K562 (cell line): ENCODE measurements at regions of chr14 and their contacts with region 1.

Region 1: GRCh38 chr14:22472935-22473854 is 115.8 kb downstream of the DAD1 start:
- DNase-seq: peak; percentile 12 to 55 (median 22)
- ATAC-seq: peak; percentile 71
- H3K4me3 ChIP-seq: no peak overlapping the region
- H3K27ac ChIP-seq: no peak overlapping the region
- H3K4me1 ChIP-seq: peaks cover 0 to 3% of the 10 kb centered on the region in 2 experiments; a peak in 4 of 5 replicates
- H3K27me3 ChIP-seq: peaks cover 2 to 9% of the 10 kb centered on the region in 2 experiments; a peak in 3 of 5 replicates
- CTCF ChIP-seq: peak; percentile 54 to 74 (median 65); a peak in 5 of 6 replicates
- EP300 ChIP-seq: no peak
- POLR2A ChIP-seq: no peak
- RAD21 ChIP-seq: peak; percentile 80 to 88

Region 2: DNA sequence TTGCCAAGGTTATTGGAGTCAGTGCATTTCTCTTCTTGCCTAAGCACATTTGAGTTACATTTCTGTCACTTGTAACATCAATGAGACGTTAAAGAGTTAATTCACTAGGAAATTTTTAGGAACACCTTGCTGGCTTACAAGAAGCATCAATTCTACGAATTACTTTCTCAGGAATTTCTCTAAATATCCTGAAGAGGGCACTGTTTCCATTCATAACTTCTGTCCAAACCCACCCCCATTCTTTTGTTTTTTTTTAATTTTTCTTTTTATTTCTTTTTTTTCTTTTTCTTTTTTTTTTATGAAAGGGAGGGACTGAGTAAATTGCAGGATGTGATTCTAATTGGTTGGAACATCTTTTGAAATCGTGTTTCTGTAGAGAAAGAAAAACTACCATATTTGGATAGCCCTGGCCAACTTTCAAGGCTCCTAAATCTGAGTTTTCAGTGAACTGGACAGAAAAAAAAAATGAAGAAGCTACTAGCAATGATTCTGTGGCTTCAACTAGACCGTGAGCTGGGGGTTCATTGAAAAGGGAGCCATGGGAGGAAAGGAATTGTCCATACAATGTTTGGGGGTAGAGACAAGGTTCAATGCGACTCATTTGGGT is 169.5 kb before region 1 on chr14:
- CTCF ChIA-PET with region 1: no interaction called
- POLR2A ChIA-PET with region 1: no interaction called
- in situ Hi-C with region 1: loop called (anchors 10 kb)
- intact Hi-C with region 1: no loop called
- DNase-seq: peak in 2 of 4 experiments; percentile 12 to 15
- ATAC-seq: no peak
- H3K4me3 ChIP-seq: no peak overlapping the region
- H3K27ac ChIP-seq: no peak overlapping the region
- H3K4me1 ChIP-seq: no peaks in the 10 kb centered on the region
- H3K27me3 ChIP-seq: peaks cover 2 to 5% of the 10 kb centered on the region in 2 experiments; a peak in 3 of 5 replicates
- CTCF ChIP-seq: peak in 2 of 3 experiments; percentile 14 to 44; a peak in 3 of 6 replicates
- EP300 ChIP-seq: no peak
- POLR2A ChIP-seq: no peak
- RAD21 ChIP-seq: peak in 1 of 2 experiments; percentile 36; a peak in 2 of 4 replicates

Region 3: DNA sequence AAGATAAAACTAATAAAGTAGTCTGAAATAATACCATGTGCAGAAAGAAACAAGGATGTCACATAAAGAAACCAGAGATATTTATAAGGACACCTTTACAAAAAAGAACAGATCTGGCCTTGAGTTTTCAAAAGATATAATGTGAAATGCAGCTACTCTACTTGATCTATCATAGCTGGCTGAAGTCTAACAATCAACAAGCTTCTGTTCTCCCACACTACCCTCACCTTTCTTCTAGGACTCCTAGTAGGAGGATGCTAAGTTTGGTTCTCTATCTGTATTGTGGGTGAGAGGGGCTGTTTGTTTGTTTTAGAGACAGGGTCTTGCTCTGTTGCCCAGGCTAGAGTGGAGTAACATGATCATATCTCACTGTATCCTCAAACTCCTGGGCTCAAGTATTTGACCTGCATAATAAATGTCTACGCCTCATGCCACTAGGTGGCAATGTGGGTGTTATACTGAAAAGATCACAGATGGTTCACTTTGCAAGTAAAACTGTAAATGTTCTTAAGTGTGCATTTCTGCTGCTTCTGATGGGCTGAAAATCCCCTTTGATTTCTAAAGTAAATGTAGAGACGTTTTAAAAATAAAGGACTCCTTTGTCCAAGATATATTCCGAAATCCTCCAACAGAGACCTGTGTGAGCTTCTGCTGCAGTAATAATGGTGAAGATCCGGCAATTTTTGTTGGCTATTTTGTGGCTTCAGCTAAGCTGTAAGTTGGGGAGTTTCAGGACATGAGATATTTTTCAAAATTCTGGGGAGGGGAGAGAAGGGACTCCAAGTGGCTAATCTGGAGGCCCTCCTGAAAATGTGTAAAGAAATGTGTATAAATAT is 153.5 kb before region 1 on chr14:
- CTCF ChIA-PET with region 1: interaction called, 8 read pairs
- POLR2A ChIA-PET with region 1: no interaction called
- in situ Hi-C with region 1: no loop called
- intact Hi-C with region 1: loop called (anchors 5 kb)
- DNase-seq: peak in 2 of 4 experiments; percentile 20 to 53
- ATAC-seq: peak; percentile 79
- H3K4me3 ChIP-seq: no peak overlapping the region
- H3K27ac ChIP-seq: no peak overlapping the region
- H3K4me1 ChIP-seq: no peaks in the 10 kb centered on the region
- H3K27me3 ChIP-seq: no peaks in the 10 kb centered on the region
- CTCF ChIP-seq: peak; percentile 51 to 68 (median 56); a peak in 5 of 6 replicates
- EP300 ChIP-seq: no peak
- POLR2A ChIP-seq: no peak
- RAD21 ChIP-seq: peak; percentile 56 to 83

Region 4: GRCh38 chr14:22386924-22387775 is 86.0 kb before region 1 on chr14:
- CTCF ChIA-PET with region 1: interaction called, 33 read pairs
- POLR2A ChIA-PET with region 1: interaction called, 5 read pairs
- in situ Hi-C with region 1: loop called (anchors 5 kb)
- intact Hi-C with region 1: loop called (anchors 1 kb)
- DNase-seq: peak; percentile 55 to 78 (median 60)
- ATAC-seq: peak; percentile 77
- H3K4me3 ChIP-seq: no peak overlapping the region
- H3K27ac ChIP-seq: no peak overlapping the region
- H3K4me1 ChIP-seq: no peaks in the 10 kb centered on the region
- H3K27me3 ChIP-seq: peaks cover 8 to 19% of the 10 kb centered on the region in 2 experiments; a peak in 3 of 5 replicates
- CTCF ChIP-seq: peak; percentile 66 to 77 (median 69)
- EP300 ChIP-seq: no peak
- POLR2A ChIP-seq: no peak
- RAD21 ChIP-seq: peak; percentile 70 to 85

Region 5: GRCh38 chr14:22432348-22432976 is 40.7 kb before region 1 on chr14:
- CTCF ChIA-PET with region 1: no interaction called
- POLR2A ChIA-PET with region 1: no interaction called
- in situ Hi-C with region 1: no loop called
- intact Hi-C with region 1: loop called (anchors 5 kb)
- DNase-seq: peak in 1 of 4 experiments; percentile 20
- ATAC-seq: no peak
- H3K4me3 ChIP-seq: no peak overlapping the region
- H3K27ac ChIP-seq: no peak overlapping the region
- H3K4me1 ChIP-seq: peaks cover 0 to 12% of the 10 kb centered on the region in 2 experiments; a peak in 4 of 5 replicates
- H3K27me3 ChIP-seq: no peaks in the 10 kb centered on the region; a peak in 1 of 5 replicates
- CTCF ChIP-seq: no peak
- EP300 ChIP-seq: no peak
- POLR2A ChIP-seq: no peak
- RAD21 ChIP-seq: no peak

Region 6: DNA sequence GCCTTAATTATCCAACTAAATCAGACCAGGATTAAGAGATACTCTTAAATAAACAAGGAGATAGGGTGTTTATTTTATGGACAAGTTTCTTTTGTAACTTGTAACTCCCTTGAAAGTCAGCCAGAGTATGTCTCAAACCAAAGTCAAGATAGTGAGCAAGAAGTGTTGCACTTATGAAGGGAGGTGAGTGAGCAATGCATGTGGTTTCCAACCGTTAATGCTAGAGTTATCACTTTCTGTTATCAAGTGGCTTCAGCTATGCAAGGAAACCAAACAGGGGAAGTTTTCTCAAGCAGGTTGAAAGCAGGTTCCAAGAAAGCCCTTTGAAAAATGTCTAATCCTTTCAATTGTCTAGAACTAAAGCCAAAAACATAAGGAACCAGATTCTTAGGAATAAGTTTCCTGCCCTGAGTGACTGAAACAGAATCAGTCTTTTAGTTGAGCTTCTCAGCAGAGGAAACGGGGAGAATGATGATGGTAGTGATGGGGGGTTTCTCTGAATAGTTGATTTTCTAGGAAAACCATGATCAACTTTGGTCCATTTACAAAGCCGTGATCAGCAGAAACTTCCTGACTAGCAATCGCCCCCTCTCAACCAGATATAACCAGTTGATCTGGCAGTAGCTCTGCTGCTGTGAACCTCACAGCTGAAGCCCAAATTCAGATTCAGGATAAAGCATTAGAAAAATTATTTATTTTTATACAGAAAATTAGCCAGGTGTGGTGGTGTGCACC is 12.6 kb before region 1 on chr14:
- CTCF ChIA-PET with region 1: no interaction called
- POLR2A ChIA-PET with region 1: no interaction called
- in situ Hi-C with region 1: no loop called
- intact Hi-C with region 1: no loop called
- DNase-seq: peak in 3 of 4 experiments; percentile 7 to 63 (median 35)
- ATAC-seq: peak; percentile 69
- H3K4me3 ChIP-seq: no peak overlapping the region
- H3K27ac ChIP-seq: peak overlapping the region; percentile 72
- H3K4me1 ChIP-seq: peaks cover 0 to 3% of the 10 kb centered on the region in 2 experiments; a peak in 3 of 5 replicates
- H3K27me3 ChIP-seq: no peaks in the 10 kb centered on the region
- CTCF ChIP-seq: no peak
- EP300 ChIP-seq: peak; percentile 84
- POLR2A ChIP-seq: no peak
- RAD21 ChIP-seq: no peak

Region 7: GRCh38 chr14:22556990-22557623 is 83.9 kb after region 1 on chr14:
- CTCF ChIA-PET with region 1: no interaction called
- POLR2A ChIA-PET with region 1: no interaction called
- in situ Hi-C with region 1: no loop called
- intact Hi-C with region 1: no loop called
- DNase-seq: peak; percentile 80 to 88 (median 82)
- ATAC-seq: peak; percentile 88
- H3K4me3 ChIP-seq: 0 out of 2 replicates have a peak overlapping the region, but pooled peaks have one; percentile 21
- H3K27ac ChIP-seq: peak overlapping the region; percentile 71
- H3K4me1 ChIP-seq: peaks cover 32 to 42% of the 10 kb centered on the region in 2 experiments
- H3K27me3 ChIP-seq: no peaks in the 10 kb centered on the region
- CTCF ChIP-seq: peak; percentile 75 to 98 (median 90); a peak in 5 of 6 replicates
- EP300 ChIP-seq: no peak
- POLR2A ChIP-seq: no peak
- RAD21 ChIP-seq: peak; percentile 93 to 96

Region 8: DNA sequence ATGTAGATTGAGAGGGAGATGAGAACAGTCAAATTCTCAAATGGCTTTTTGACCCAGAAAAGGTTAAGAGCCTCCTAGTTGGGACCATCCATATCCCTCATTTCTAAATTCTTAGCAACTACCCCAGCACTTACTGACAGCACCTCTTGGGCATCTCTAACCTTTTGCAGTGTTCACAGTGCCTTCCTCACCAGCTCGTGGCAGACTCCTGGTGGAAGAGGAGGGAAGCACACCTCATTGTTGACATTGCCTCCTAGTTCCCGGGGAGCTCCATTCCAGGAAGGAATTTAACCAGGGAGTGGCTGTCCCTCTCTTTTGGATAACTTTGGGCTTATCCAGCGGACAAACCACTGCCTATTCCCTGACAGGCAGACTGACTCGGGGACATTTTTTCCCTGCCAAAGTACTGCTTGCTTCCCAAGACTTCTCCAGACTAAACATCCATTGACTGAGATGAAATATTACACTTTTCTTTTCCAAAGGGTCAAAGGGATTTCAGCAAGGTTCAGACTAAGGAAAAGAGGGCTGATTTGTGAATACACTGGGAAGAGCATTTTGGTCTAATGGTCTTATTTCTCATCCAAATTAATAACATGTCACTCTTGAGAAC is 179.9 kb after region 1 on chr14:
- CTCF ChIA-PET with region 1: no interaction called
- POLR2A ChIA-PET with region 1: no interaction called
- in situ Hi-C with region 1: no loop called
- intact Hi-C with region 1: no loop called
- DNase-seq: peak; percentile 47 to 68 (median 58)
- ATAC-seq: peak; percentile 87
- H3K4me3 ChIP-seq: no peak overlapping the region
- H3K27ac ChIP-seq: no peak overlapping the region
- H3K4me1 ChIP-seq: no peaks in the 10 kb centered on the region; a peak in 1 of 5 replicates
- H3K27me3 ChIP-seq: no peaks in the 10 kb centered on the region
- CTCF ChIP-seq: peak; percentile 85 to 86 (median 86)
- EP300 ChIP-seq: no peak
- POLR2A ChIP-seq: no peak
- RAD21 ChIP-seq: peak; percentile 80 to 94

Region 9: DNA sequence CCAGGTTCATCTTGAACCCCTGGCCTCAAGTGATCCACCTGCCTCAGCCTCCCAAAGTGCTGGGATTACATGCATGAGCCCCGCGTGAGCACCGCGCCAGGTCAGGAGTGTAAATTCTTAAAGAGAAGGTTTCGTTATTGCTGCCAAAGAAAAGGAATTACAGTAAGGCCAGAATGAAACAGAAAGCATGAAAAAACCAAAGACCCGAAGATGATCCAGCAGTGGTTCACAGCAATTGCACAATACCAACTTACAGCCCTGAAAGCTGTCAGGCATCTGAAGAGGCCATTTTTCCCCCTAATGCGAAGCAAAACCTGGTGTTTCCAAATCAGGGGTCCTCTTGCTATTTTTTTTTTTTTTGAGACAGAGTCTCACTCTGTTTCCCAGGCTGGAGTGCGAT is 435.4 kb after region 1 on chr14:
- CTCF ChIA-PET with region 1: no interaction called
- POLR2A ChIA-PET with region 1: no interaction called
- in situ Hi-C with region 1: no loop called
- intact Hi-C with region 1: no loop called
- DNase-seq: no peak
- ATAC-seq: no peak
- H3K4me3 ChIP-seq: no peak overlapping the region
- H3K27ac ChIP-seq: no peak overlapping the region
- H3K4me1 ChIP-seq: no peaks in the 10 kb centered on the region
- H3K27me3 ChIP-seq: no peaks in the 10 kb centered on the region
- CTCF ChIP-seq: no peak
- EP300 ChIP-seq: no peak
- POLR2A ChIP-seq: no peak
- RAD21 ChIP-seq: no peak